ENCODE measurements at regions of chr3 and their contacts with region 1.

Region 1: GRCh38 chr3:190926619-190927018 is 64.1 kb upstream of the GMNC start:
- DNase-seq: no peak
- H3K4me3 ChIP-seq: no peak overlapping the region
- H3K27ac ChIP-seq: no peak overlapping the region
- H3K4me1 ChIP-seq: no peaks in the 10 kb centered on the region
- H3K27me3 ChIP-seq: no peaks in the 10 kb centered on the region
- CTCF ChIP-seq: no peak

Region 2: DNA sequence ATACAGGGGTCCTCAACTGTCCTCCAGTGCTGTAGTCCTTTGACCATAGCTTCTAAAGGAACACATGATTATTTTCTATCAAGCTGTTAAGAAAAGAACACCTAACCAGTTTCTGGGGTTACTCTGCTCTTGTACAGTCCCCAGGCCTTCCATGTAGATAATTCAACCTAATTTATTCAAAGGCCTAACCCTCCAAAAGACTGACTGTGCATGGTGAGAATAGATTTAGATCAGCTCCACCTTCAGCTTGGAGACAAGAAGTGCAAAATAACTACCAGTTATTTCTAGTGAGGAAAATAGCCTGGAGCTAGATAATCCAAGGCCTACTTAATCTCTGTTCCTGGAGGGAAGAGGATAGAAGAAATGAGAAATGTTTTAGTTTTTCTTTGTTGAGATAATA is 152.0 kb before region 1 on chr3:
- CTCF ChIA-PET with region 1: no interaction called
- POLR2A ChIA-PET with region 1: interaction called, 11 read pairs
- intact Hi-C with region 1: no loop called
- DNase-seq: no peak
- H3K4me3 ChIP-seq: no peak overlapping the region
- H3K27ac ChIP-seq: no peak overlapping the region
- H3K4me1 ChIP-seq: no peaks in the 10 kb centered on the region
- H3K27me3 ChIP-seq: no peaks in the 10 kb centered on the region
- CTCF ChIP-seq: no peak

Region 3: GRCh38 chr3:191303596-191303995 is 377.0 kb after region 1 on chr3:
- CTCF ChIA-PET with region 1: no interaction called
- POLR2A ChIA-PET with region 1: no interaction called
- intact Hi-C with region 1: no loop called
- DNase-seq: peak in 1 of 2 experiments; percentile 27
- H3K4me3 ChIP-seq: no peak overlapping the region
- H3K27ac ChIP-seq: no peak overlapping the region
- H3K4me1 ChIP-seq: no peaks in the 10 kb centered on the region
- H3K27me3 ChIP-seq: no peaks in the 10 kb centered on the region
- CTCF ChIP-seq: no peak

Measured in PC-9 (cell line).